MCF 10A (cell line): ENCODE measurements at regions of chr12 and their contacts with region 1.

Region 1: DNA sequence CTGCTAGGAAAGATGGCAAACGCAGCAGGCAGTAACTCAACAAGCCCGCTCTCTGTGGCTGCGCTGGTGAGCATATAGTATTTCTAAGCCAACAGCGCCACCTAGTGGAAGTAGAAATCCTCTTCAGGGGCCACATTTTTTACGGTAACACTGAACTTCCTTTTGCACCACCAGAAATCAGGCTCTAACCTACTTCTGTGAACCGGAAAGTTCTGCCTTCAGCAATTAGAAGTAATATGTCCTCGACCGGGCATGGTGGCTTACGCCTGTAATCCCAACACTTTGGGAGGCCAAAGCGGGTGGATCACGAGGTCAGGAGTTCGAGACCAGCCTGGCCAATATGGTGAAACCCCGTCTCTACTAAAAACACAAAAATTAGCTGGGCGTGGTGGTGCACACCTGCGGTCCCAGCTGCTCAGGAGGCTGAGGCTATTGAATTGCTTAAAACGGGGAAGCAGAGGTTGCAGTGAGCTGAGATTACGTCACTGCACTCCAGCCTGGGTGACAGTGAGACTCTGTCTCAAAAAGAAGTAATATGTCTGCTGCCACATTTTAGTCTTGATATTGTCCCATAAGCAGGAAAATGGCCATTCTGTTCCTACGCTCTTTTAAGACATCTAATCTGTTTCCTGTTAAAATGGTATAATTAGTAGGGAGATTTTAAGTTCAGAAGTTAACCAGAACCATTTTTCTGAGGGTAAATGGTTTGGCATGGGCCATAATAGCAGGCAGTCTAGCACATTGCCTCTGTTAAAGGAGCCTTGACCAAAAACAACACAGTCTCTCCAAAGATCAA is 26.8 kb downstream of the APOBEC1 start:
- DNase-seq: peak; percentile 82
- H3K4me3 Mint-ChIP-seq: no peak overlapping the region
- H3K27ac Mint-ChIP-seq: no peak overlapping the region
- H3K4me1 Mint-ChIP-seq: peaks cover 6% of the 10 kb centered on the region
- H3K27me3 Mint-ChIP-seq: no peaks in the 10 kb centered on the region
- CTCF ChIP-seq: peak; percentile 77

Region 2: GRCh38 chr12:7219599-7220243 is 419.2 kb before region 1 on chr12:
- CTCF ChIA-PET with region 1: interaction called, 25 read pairs
- POLR2A ChIA-PET with region 1: no interaction called
- intact Hi-C with region 1: loop called (anchors 1 kb)
- DNase-seq: peak; percentile 80
- H3K4me3 Mint-ChIP-seq: no peak overlapping the region
- H3K27ac Mint-ChIP-seq: no peak overlapping the region
- H3K4me1 Mint-ChIP-seq: no peaks in the 10 kb centered on the region
- H3K27me3 Mint-ChIP-seq: peaks cover 23% of the 10 kb centered on the region
- CTCF ChIP-seq: peak; percentile 84

Region 3: GRCh38 chr12:7583571-7583970 is 55.4 kb before region 1 on chr12:
- CTCF ChIA-PET with region 1: interaction called, 65 read pairs
- POLR2A ChIA-PET with region 1: interaction called, 5 read pairs
- intact Hi-C with region 1: loop called (anchors 1 kb)
- DNase-seq: no peak
- H3K4me3 Mint-ChIP-seq: no peak overlapping the region
- H3K27ac Mint-ChIP-seq: peak overlapping the region; percentile 57
- H3K4me1 Mint-ChIP-seq: peaks cover 11% of the 10 kb centered on the region
- H3K27me3 Mint-ChIP-seq: no peaks in the 10 kb centered on the region
- CTCF ChIP-seq: no peak

Region 4: GRCh38 chr12:7628381-7628961 is 10.5 kb before region 1 on chr12:
- CTCF ChIA-PET with region 1: interaction called, 13 read pairs
- POLR2A ChIA-PET with region 1: no interaction called
- intact Hi-C with region 1: no loop called
- DNase-seq: no peak
- H3K4me3 Mint-ChIP-seq: no peak overlapping the region
- H3K27ac Mint-ChIP-seq: no peak overlapping the region
- H3K4me1 Mint-ChIP-seq: no peaks in the 10 kb centered on the region
- H3K27me3 Mint-ChIP-seq: no peaks in the 10 kb centered on the region
- CTCF ChIP-seq: no peak

Region 5: DNA sequence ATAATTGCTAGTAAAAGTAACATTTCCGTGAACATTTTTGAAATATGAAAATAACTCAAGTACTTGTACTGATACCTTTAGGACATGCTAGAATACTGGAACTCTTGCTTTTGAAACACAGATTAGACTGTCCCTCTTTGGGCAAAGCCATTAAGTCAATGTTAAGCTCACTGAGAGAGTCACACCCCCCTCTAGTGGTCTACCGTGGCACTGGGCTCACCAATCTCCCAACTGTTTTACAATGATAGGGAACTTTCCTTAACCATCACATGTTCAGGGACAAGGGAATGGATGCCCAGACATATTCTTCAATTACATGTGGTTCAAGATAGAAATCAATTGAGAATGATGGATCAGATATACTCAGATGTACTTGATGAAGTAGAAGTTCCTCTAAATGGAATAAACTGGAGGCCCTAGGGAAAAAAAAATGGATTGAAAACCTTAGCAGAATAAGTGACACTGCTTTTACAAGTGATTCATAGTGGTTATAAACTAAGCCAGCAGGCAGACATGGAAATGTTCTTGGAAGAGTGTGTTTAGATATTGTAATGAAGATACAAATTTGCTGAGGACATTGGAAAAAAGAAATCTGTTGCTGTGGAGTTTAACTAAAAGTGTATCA is 168.0 kb after region 1 on chr12:
- CTCF ChIA-PET with region 1: interaction called, 10 read pairs
- POLR2A ChIA-PET with region 1: no interaction called
- intact Hi-C with region 1: loop called (anchors 1 kb)
- DNase-seq: peak; percentile 74
- H3K4me3 Mint-ChIP-seq: no peak overlapping the region
- H3K27ac Mint-ChIP-seq: no peak overlapping the region
- H3K4me1 Mint-ChIP-seq: no peaks in the 10 kb centered on the region
- H3K27me3 Mint-ChIP-seq: no peaks in the 10 kb centered on the region
- CTCF ChIP-seq: peak; percentile 92

Region 6: DNA sequence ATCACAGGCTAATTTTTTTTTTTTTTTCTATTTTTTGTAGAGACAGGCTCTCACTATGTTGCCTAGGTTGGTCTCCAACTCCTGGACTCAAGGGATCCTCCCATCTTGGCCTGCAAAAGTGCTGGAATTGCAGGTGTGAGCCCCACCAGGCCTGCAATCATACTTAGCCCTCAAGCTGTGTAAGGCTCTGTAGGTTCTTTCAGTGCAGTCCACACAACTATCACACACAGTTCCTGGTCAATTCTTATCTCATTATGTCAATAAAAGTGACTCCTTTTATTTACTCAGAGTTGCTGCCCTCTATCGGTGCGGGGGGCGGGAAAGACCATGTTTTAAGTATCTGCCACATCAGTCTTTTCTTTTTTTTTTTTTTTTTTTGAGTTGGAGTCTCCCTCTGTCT is 268.1 kb after region 1 on chr12:
- CTCF ChIA-PET with region 1: no interaction called
- POLR2A ChIA-PET with region 1: no interaction called
- intact Hi-C with region 1: no loop called
- DNase-seq: peak; percentile 61
- H3K4me3 Mint-ChIP-seq: no peak overlapping the region
- H3K27ac Mint-ChIP-seq: no peak overlapping the region
- H3K4me1 Mint-ChIP-seq: no peaks in the 10 kb centered on the region
- H3K27me3 Mint-ChIP-seq: no peaks in the 10 kb centered on the region
- CTCF ChIP-seq: peak; percentile 17

Region 7: DNA sequence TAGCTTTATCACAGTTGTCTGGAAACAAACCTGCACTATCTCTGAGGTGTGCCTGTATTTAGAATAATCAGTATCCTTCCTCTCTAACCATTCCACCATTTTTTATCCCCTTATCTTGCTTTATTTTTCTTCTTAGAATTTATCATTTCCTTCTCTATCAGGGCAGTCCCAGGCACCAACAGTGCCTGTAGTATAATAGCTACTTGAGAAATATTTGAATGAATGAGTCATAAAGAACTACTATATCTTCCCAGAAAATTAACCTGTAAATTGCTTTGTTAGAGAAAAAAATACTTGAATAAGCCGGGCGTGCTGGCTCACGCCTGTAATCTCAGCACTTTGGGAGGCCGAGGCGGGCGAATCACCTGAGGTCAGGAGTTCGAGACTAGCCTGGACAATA is 372.4 kb after region 1 on chr12:
- CTCF ChIA-PET with region 1: no interaction called
- POLR2A ChIA-PET with region 1: no interaction called
- intact Hi-C with region 1: no loop called
- DNase-seq: peak; percentile 46
- H3K4me3 Mint-ChIP-seq: no peak overlapping the region
- H3K27ac Mint-ChIP-seq: no peak overlapping the region
- H3K4me1 Mint-ChIP-seq: peaks cover 6% of the 10 kb centered on the region
- H3K27me3 Mint-ChIP-seq: peaks cover 8% of the 10 kb centered on the region
- CTCF ChIP-seq: no peak